ENCODE measurements at regions of chr5 and their contacts with region 1.

Region 1: GRCh38 chr5:42950440-42951292 is 89.5 kb downstream of the ANXA2R start:
- DNase-seq: peak; percentile 61
- H3K4me3 Mint-ChIP-seq: peak overlapping the region; percentile 92
- H3K27ac Mint-ChIP-seq: peak overlapping the region; percentile 99
- H3K4me1 Mint-ChIP-seq: peaks cover 24% of the 10 kb centered on the region
- H3K27me3 Mint-ChIP-seq: peaks cover 2% of the 10 kb centered on the region

Region 2: DNA sequence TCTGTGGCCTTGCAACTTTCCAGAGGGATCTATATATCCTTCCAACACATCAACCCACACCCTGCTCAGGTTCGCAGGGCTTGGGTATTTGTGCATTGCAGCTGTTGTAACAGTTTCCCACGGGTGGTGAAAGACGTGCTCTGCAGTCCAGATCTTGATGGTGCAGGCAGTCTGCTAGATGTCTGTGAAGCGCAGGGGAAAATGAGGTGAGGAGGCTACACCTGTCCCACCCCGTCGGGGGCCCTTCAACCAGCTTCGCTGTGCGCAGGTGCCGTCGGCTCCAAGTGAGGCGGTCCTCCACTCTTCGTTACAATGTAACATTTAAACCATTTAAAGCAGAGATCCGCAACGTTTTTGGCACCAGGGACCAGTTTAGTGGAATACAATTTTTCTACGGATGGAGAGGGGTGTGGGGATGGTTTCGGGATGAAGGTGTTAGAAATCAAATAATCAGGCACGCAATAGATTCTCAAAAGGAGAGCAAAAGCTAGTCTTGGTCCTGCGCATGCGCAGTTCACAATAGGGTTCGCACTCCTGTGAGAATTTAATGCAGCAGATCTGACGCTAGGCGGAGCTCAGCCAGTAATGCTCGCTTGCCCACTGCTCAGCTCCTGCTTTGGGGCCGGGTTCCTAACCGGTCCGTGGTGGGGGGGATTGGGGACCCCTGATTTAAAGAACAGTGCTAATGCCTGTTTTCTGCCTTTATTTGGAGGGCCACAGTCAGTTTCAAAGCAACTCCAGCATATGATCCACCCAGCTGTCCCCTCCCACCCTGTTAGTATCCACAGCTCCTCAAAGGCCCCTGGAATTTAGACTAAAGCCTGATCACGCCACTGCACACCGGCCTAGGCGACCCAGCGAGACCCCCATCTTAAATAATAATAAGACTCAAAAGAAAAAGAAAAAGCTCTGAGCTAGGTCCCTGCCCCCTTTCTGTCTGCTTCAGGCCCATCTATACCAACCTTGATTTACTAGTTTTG is 41.9 kb before region 1 on chr5:
- intact Hi-C with region 1: loop called (anchors 1 kb)
- DNase-seq: peak; percentile 86
- H3K4me3 Mint-ChIP-seq: peak overlapping the region; percentile 77
- H3K27ac Mint-ChIP-seq: peak overlapping the region; percentile 14
- H3K4me1 Mint-ChIP-seq: peaks cover 16% of the 10 kb centered on the region
- H3K27me3 Mint-ChIP-seq: peaks cover 31% of the 10 kb centered on the region

Region 3: DNA sequence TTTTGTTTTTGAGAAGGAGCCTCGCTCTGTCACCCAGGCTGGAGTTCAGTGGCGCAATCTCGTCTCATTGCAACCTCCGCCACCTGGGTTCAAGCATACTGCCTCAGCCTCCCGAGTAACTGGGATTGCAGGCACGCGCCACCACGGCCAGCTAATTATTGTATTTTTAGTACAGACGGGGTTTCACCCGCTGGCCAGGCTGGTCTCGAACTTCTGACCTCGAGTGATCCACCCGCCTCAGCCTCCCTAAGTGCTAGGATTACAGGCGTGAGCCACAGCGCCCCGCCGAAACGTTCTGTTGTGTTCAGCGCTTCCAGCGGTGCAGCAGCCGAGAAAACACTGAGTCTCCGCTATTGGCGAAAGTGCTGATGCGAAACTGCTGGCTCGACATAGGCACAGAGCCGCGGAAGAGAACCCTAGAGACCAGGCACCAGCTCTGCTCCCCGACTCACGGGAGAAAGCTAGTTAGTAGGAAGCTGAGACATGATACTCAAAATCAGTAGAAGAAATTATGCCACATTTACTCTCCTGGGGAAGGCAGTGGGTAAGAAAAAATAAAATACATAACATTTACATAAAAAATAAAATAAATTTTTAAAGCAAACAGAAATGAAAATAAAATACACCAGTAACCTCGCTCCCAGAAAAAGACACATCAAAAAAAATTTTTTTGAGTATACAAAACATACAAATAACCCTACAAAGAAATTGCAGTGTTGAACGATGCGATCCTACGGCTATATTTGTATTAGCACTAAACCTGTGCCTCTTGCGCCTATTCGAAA is 57.9 kb after region 1 on chr5:
- intact Hi-C with region 1: loop called (anchors 1 kb)
- DNase-seq: peak; percentile 88
- H3K4me3 Mint-ChIP-seq: peak overlapping the region; percentile 85
- H3K27ac Mint-ChIP-seq: peak overlapping the region; percentile 95
- H3K4me1 Mint-ChIP-seq: peaks cover 24% of the 10 kb centered on the region
- H3K27me3 Mint-ChIP-seq: no peaks in the 10 kb centered on the region

Region 4: DNA sequence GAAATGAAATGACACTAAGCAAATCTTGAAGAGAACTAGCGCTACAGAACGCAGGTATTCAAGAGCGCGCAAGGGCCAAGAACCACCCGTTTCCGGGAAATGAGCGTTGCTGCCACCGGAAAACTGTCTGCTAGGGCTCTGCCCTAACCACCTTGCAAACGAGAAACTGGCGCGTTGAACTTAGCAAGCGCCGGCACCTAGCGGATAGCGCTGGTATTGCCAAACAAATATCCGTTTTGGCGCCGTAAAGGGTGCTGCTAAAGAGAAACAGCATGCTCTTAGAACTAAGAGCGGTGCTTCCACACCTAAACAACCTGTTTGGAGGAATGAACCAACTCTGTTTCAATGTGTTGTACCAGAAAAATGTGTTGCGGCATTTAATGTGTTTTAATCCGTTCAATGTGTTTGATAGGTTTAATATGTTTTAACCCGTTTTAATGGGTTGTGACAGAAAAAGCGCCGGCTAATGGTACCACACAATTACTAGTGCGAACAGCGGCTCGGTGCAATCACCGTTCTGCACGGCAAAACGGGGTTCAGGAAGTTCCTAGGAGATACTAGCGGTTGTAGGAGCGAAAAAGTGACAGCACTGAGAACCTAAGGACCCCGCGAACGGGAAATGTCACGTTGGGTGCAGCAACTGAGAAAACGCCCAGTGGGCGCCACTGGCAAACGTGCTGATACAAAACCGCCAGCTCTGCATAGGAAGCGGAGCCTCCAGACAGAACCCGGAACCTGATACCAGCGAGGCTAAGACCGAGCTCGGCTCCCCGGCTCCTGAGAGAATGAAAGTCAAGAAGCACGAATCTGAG is 89.8 kb after region 1 on chr5 and contains the start of gene ANXA2R:
- intact Hi-C with region 1: loop called (anchors 1 kb)
- DNase-seq: peak; percentile 95
- H3K4me3 Mint-ChIP-seq: peak within 1 kb of the TSS; percentile 92
- H3K27ac Mint-ChIP-seq: peak within 1 kb of the TSS; percentile 97
- H3K4me1 Mint-ChIP-seq: peaks cover 47% of the 10 kb centered on the region
- H3K27me3 Mint-ChIP-seq: no peaks in the 10 kb centered on the region
- total RNA-seq, gene ANXA2R: 2.1 and 2.5 TPM in 2 replicates

Region 5: DNA sequence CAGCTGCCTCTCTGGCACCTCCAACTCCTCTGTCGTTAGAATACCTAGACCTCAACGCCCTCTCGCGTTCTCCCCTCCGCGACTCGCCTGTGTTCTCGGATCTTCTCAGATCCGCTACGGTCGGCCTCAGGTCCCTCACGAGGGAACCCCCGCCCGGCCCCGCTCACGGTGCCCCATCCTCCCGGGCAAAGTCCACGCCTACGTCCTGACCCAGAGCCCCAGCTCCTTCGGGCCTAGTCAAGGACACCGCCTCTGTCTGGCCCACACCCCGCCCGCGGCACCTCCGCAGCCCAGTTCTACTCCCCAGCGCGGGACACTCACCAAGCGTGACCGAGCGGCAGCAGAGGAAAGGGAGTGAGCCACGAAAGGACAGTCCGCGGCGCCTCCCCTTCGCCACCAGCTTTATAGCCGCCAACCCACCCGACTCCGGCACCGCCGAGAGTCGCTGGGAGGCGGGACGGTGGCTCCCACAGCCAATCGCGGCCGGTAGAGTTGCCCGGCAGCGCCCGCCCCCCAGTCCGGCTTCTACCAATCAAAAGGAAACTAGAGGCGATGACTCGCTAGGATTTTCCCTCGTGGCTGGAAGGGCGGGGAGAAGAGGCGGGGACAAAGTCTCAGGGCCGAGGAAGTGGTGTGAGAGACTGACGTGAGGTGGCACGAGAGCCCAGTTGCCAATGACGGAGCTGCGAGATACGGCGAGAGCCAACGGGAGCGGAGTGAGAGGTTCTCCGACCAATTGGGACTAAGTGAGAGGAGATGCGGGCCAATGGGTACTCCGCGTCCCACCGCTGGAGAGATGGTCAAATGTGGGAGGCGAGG is 362.6 kb after region 1 on chr5 and contains the start of gene HMGCS1:
- intact Hi-C with region 1: loop called (anchors 2 kb)
- DNase-seq: peak; percentile 99
- H3K4me3 Mint-ChIP-seq: peak within 1 kb of the TSS; percentile 98
- H3K27ac Mint-ChIP-seq: peak within 1 kb of the TSS; percentile 95
- H3K4me1 Mint-ChIP-seq: peaks cover 67% of the 10 kb centered on the region
- H3K27me3 Mint-ChIP-seq: no peaks in the 10 kb centered on the region
- total RNA-seq, gene HMGCS1: 232 and 233 TPM in 2 replicates